ENCODE measurements at regions of chr2 and their contacts with region 1.

Region 1: DNA sequence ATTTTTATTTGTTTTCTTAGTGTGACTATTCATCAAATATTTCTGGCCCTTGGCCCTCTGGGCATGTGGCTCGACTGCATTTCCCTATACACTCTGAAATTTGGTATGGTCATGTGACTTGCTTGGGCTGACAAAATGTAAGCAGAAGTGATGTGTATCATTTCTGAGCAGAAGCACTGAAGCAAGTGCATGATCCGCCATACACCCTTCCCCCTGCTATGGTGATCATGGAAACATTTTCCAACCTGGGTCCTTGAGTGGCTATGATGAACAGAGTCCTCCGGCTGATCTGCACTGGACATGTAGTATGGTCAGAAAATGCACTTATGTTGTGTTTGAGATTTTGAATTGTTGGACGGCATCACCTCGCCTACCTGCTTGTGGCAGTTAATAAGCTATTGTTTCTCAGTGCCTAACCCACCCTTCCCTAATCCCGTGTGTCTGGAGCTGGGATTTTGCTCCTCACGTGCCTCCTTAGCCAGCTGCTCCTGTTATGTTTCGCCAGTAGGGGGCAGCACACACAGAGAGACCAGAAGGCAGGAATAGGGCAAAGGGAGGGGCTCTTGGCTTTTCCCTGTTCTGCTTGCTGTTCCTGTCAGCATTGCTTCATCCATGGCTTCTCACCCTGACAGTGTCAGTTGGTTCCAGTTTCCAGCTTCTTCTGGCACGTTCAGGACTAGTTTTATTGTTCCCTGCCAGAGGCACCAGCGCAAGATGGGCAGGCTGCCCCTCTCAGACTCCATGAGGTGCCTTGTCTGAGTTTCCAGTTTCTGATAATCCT is 207.3 kb downstream of the ARL6IP6 start:
- DNase-seq: peak; percentile 51 to 84 (median 76)
- ATAC-seq: peak; percentile 95
- H3K4me3 ChIP-seq: no peak overlapping the region
- H3K4me1 ChIP-seq: no peaks in the 10 kb centered on the region
- CTCF ChIP-seq: peak; percentile 61

Region 2: DNA sequence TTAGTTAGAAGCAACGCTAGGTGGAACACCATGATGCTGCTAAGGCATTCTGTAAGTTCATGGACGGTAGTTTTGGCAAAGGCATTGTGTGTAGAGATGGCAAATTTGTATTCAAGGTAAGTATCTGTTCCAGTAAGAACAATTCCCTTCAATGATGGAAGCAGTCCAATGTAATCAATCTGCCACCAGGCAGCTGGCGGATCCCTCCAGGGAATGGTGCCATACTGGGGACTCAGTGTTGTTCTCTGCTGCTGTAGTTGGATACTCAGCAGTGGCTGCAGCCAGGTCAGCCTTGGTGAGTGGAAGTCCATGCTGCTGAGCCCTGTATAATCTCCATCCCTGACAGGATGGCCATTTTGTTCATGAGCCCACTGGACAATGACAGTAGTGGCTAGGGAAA is 144.6 kb before region 1 on chr2:
- intact Hi-C with region 1: no loop called
- DNase-seq: no peak
- ATAC-seq: no peak
- H3K4me3 ChIP-seq: no peak overlapping the region
- H3K4me1 ChIP-seq: no peaks in the 10 kb centered on the region
- CTCF ChIP-seq: no peak

Region 3: GRCh38 chr2:153478334-153479261 is 552.9 kb after region 1 on chr2 and contains the start of gene RPRM:
- intact Hi-C with region 1: loop called in 1 of 2 experiments (anchors 5 kb)
- DNase-seq: peak; percentile 65 to 82 (median 70)
- ATAC-seq: peak; percentile 95
- H3K4me3 ChIP-seq: no peak within 1 kb of the TSS
- H3K4me1 ChIP-seq: peaks cover 20% of the 10 kb centered on the region
- CTCF ChIP-seq: peak; percentile 86
- total RNA-seq, gene RPRM: 2.5 to 9.2 TPM in 2 of 3 donors, not detected in the other

Measured in mucosa of descending colon (tissue), 3 donors.